ENCODE measurements at regions of chr14 and their contacts with region 1.

Region 1: GRCh38 chr14:22561661-22562579 is 27.1 kb downstream of the DAD1 start:
- DNase-seq: peak; percentile 51
- CTCF ChIP-seq: no peak

Region 2: DNA sequence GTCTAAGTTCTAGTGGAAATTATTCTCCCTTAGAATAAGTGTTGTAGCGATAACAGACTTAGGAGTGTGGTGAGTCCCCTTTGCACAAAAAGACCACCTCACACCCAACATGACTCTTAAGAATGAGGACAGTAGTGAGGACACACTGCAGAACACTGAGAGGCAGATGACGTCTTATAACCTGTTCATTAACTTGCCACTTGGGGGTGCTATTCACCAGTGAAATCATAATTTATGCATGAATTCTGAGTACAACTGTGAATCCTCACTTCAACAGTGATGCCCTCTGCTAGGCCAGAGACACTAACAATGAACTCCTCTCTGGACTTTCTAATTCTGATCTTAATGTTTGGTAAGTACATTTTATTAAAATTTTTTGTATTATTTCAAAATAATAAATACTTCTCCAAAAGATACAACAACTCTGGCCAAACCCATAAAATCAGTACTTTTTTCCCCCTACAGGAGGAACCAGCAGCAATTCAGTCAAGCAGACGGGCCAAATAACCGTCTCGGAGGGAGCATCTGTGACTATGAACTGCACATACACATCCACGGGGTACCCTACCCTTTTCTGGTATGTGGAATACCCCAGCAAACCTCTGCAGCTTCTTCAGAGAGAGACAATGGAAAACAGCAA is 247.6 kb before region 1 on chr14:
- in situ Hi-C with region 1: loop called (anchors 10 kb)
- DNase-seq: peak; percentile 70
- CTCF ChIP-seq: peak; percentile 58

Measured in GM13976 (cell line).